Naive thymus-derived CD4-positive, alpha-beta T cell (primary cell): ENCODE measurements at regions of chr19 and their contacts with region 1.

Region 1: DNA sequence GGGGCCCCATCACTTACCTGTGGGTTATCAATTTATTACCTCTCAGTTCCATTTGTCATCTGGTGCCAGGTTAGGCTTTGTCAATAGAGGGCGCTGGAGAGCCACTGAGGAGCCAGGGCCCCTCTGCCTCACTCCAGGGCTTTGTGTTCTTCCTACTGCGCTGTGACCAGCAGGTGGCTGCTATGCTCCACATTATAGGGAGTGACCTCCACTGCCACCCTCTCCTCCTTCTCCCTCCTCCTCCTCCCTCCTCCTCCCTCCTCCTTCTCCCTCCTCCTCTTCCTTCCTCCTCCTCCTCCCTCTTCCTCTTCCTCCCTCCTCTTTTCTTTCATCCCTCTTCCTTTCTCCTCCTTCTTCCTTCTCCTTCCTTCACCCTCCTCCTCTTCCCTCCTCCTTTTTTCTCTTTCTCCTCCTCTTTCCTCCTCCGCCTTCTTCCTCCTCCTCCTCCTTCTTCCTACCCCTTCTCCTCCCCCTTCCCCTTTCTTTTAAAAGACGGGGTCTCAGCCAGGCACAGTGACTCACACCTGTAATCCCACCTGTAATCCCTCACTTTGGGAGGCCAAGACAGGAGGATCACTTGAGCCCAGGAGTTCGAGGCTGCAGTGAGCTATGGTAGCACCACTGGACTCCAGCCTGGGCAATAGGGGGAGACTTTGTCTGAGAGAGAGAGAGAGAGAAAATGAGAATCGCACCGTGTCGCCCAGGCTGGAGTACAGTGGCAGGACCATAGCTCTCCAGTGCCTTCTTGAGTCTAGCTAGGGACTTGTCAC is 10.3 kb upstream of the ZBTB32 start:
- DNase-seq: peak; percentile 75 to 93 (median 86)
- ATAC-seq: peak; percentile 100
- H3K4me3 ChIP-seq: no peak overlapping the region
- H3K4me3 Mint-ChIP-seq: no peak overlapping the region
- H3K27ac ChIP-seq: no peak overlapping the region
- H3K27ac Mint-ChIP-seq: peak overlapping the region in 4 of 9 donors; percentile 6 to 62 (median 40)
- H3K4me1 ChIP-seq: no peaks in the 10 kb centered on the region
- H3K4me1 Mint-ChIP-seq: peaks cover 0 to 27% (median 0%) of the 10 kb centered on the region in 7 donors
- H3K27me3 ChIP-seq: no peaks in the 10 kb centered on the region
- H3K27me3 Mint-ChIP-seq: no peaks in the 10 kb centered on the region

Region 2: DNA sequence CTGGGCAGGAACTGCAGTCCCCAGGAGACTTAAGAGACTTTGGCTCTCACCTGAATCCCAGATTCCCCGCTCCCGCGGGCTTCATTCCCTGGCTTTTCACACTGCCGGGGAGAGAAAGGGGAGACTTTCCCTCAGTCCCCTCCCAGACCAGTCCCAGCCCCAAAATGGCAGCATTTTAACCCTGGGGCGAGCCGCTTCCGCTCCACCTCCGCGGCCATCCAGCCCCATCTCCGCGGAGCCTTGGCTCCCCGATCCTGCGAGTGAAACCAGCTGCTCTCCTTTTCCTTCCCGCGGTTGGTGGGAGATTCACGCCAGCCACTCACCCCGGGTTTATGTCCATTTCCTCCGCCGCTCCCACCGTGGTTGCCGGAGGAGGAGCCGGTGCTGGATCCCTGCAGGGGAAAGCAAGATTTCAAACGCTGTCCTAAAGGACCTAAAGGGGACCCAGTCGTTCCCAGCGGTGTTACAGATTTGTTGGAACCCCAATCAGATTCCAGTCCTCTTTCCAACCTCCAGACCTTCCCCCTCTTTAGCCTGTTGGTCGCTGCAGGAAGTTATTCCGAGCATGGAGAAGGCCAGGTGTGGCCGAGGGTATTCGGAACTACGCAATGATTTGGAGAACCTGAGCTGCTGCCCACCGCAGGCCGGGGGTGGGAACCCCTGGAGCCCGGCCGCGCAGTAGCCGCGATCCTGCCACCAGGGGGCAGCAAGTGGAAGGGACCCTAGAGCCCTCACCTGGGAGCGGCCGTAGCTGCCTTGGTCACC is 184.0 kb before region 1 on chr19:
- CTCF ChIA-PET with region 1: no interaction called
- POLR2A ChIA-PET with region 1: no interaction called
- intact Hi-C with region 1: no loop called
- DNase-seq: peak; percentile 34 to 80 (median 58)
- ATAC-seq: peak; percentile 83
- H3K4me3 ChIP-seq: peak overlapping the region; percentile 53
- H3K4me3 Mint-ChIP-seq: peak overlapping the region; percentile 28 to 84 (median 76)
- H3K27ac ChIP-seq: no peak overlapping the region
- H3K27ac Mint-ChIP-seq: peak overlapping the region in 3 of 9 donors; percentile 20 to 61 (median 46)
- H3K4me1 ChIP-seq: peaks cover 12 to 17% of the 10 kb centered on the region in 2 donors
- H3K4me1 Mint-ChIP-seq: peaks cover 9 to 21% (median 14%) of the 10 kb centered on the region in 7 donors
- H3K27me3 ChIP-seq: peaks cover 0 to 4% of the 10 kb centered on the region in 2 donors
- H3K27me3 Mint-ChIP-seq: peaks cover 0 to 70% (median 14%) of the 10 kb centered on the region in 5 donors

Region 3: DNA sequence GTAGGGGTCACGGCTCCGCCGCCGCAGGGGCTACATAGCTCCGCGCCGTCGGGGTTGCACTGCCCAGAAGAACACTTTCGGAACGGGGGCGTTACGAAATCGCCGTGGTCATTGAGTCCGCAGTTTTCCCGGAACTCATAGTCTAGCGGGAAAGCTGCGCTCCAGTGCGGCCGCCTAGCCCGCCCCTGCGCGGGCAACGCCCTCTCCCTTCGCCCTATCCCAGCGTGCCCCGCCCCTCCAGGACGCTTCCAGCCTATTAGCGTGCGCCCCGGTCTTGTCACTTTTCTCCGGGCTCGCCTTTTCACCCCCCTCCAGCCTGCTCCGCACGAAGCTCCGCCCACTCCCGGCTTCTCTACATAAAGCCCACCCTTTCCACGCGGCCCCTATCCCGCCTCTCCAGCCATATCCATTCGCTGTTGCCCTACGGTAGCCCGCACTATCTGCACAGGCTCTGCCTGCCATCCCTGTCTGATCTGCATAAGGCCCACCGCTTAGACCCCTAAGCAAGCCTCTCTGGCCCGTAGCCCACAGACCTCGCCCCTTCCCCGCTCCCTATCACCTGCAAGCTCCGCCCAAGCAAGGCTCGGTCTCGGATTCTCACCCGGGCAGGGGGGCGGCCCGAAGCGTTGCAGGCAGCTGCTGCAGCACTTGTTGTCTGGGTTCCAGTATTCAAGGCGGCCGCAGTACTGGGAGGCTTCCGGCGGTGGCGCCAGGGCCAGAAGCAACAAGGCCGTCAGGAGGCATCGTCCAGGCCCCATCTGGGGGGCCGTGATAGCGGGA is 46.6 kb after region 1 on chr19:
- CTCF ChIA-PET with region 1: interaction called, 8 read pairs
- POLR2A ChIA-PET with region 1: no interaction called
- intact Hi-C with region 1: loop called (anchors 1 kb)
- DNase-seq: peak; percentile 81 to 95 (median 92)
- ATAC-seq: peak; percentile 78
- H3K4me3 ChIP-seq: peak overlapping the region; percentile 89
- H3K4me3 Mint-ChIP-seq: peak overlapping the region; percentile 87 to 100 (median 92)
- H3K27ac ChIP-seq: peak overlapping the region; percentile 91
- H3K27ac Mint-ChIP-seq: peak overlapping the region; percentile 85 to 99 (median 96)
- H3K4me1 ChIP-seq: peaks cover 27% of the 10 kb centered on the region in 2 donors
- H3K4me1 Mint-ChIP-seq: peaks cover 25 to 67% (median 48%) of the 10 kb centered on the region in 7 donors
- H3K27me3 ChIP-seq: no peaks in the 10 kb centered on the region
- H3K27me3 Mint-ChIP-seq: peaks cover 0 to 2% (median 0%) of the 10 kb centered on the region in 5 donors

Region 4: GRCh38 chr19:35775298-35776110 is 81.5 kb after region 1 on chr19 and contains the start of gene ARHGAP33:
- CTCF ChIA-PET with region 1: interaction called, 3 read pairs
- POLR2A ChIA-PET with region 1: no interaction called
- intact Hi-C with region 1: loop called in 1 of 2 experiments (anchors 1 kb)
- DNase-seq: peak; percentile 96 to 99 (median 98)
- ATAC-seq: peak; percentile 100
- H3K4me3 ChIP-seq: peak within 1 kb of the TSS; percentile 56
- H3K4me3 Mint-ChIP-seq: peak within 1 kb of the TSS; percentile 77 to 94 (median 86)
- H3K27ac ChIP-seq: peak within 1 kb of the TSS; percentile 61
- H3K27ac Mint-ChIP-seq: peak within 1 kb of the TSS in 7 of 9 donors; percentile 12 to 88 (median 84)
- H3K4me1 ChIP-seq: peaks cover 0 to 6% of the 10 kb centered on the region in 2 donors
- H3K4me1 Mint-ChIP-seq: peaks cover 11 to 28% (median 18%) of the 10 kb centered on the region in 7 donors
- H3K27me3 ChIP-seq: no peaks in the 10 kb centered on the region
- H3K27me3 Mint-ChIP-seq: no peaks in the 10 kb centered on the region
- total RNA-seq, gene ARHGAP33: 15.3 to 55.5 (median 23.4) TPM

Region 5: GRCh38 chr19:35790981-35791813 is 97.2 kb after region 1 on chr19:
- CTCF ChIA-PET with region 1: no interaction called
- POLR2A ChIA-PET with region 1: no interaction called
- intact Hi-C with region 1: no loop called
- DNase-seq: peak in 1 of 9 donors; percentile 11
- ATAC-seq: no peak
- H3K4me3 ChIP-seq: no peak overlapping the region
- H3K4me3 Mint-ChIP-seq: no peak overlapping the region
- H3K27ac ChIP-seq: no peak overlapping the region
- H3K27ac Mint-ChIP-seq: no peak overlapping the region
- H3K4me1 ChIP-seq: no peaks in the 10 kb centered on the region
- H3K4me1 Mint-ChIP-seq: no peaks in the 10 kb centered on the region
- H3K27me3 ChIP-seq: no peaks in the 10 kb centered on the region
- H3K27me3 Mint-ChIP-seq: peaks cover 4 to 13% (median 8%) of the 10 kb centered on the region in 5 donors

Region 6: DNA sequence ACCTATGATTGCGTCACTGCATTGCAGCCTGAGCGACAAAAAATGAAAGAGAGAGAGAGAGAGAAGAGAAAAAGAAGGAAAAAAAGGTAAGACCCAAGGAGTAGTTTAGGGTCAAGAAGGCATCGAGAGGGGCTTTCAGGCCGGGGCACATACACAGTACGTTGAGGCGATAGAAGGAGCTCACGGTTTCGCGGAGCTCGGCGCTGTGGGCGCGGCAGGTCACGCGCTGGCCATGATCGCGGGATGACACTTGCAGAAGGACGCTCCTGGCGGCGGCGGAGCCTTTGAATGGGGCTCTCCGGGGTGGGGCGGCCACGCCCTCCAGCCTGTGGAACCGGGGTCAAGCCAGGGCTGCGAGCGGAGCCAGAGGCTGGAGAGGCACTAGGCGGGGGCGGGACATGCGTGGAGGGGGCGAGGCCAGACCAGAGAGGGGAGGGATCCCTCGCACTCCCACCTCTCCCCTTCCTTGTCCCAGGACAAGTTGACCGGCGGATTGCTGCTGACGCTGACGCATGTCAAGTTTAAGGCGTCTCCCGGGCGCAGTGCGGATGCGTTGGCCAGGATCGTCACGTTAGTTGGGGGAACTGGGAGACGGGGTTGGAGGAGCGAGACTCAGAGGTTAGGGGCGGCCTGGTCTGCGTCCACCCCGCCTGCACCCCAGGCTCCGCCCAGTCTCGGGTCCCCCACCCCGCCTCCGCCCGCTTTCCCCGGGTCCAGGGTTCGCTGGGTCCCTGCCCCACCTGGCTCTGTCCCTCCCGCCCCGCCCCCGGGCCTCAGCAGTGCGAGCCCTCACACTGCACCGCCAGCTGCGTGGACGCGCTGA is 151.4 kb after region 1 on chr19:
- CTCF ChIA-PET with region 1: no interaction called
- POLR2A ChIA-PET with region 1: no interaction called
- intact Hi-C with region 1: no loop called
- DNase-seq: no peak
- ATAC-seq: peak; percentile 40
- H3K4me3 ChIP-seq: no peak overlapping the region
- H3K4me3 Mint-ChIP-seq: peak overlapping the region; percentile 59 to 90 (median 79)
- H3K27ac ChIP-seq: no peak overlapping the region
- H3K27ac Mint-ChIP-seq: no peak overlapping the region
- H3K4me1 ChIP-seq: peaks cover 0 to 6% of the 10 kb centered on the region in 2 donors
- H3K4me1 Mint-ChIP-seq: peaks cover 9 to 31% (median 21%) of the 10 kb centered on the region in 7 donors
- H3K27me3 ChIP-seq: peaks cover 6 to 25% of the 10 kb centered on the region in 2 donors
- H3K27me3 Mint-ChIP-seq: peaks cover 49 to 79% (median 60%) of the 10 kb centered on the region in 5 donors

Region 7: DNA sequence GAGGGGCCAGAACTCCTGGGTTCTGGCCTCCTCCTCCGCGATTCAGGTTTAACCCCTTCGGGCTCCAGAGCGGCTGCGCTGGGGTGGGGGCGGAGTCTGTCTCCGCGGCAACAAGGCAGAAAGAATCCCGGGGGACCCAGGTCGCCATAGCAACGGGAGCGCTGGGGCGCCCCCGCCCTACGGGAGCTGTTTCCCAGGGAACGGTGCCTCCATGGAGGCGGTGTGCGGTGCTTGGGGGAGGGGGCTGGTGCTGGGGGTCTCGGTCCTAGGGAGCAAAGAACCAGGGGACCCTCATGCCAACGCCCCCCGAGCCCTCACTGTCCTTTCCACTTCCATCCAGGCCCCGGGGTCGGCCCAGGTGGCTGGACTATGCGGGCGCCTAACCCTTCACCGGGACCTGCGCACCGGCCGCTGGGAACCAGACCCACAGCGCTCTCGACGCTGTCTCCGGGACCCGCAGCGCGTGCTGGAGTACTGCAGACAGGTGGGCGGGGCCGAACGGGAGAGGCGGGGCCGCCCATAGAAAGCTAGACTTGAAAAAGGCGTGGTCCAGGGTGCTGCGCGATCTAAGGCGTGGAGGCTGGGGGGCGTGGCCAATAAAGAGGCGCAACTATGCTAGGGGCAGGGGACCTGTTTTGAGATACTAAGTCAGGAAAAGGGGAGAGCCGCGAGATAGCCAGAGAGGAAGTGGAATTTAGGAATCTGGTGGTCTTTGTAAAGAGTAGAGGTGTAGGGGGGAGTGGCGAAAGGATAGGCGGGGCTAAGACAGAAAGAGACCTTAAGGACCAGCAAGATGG is 175.5 kb after region 1 on chr19:
- CTCF ChIA-PET with region 1: no interaction called
- POLR2A ChIA-PET with region 1: no interaction called
- intact Hi-C with region 1: loop called in 1 of 2 experiments (anchors 5 kb)
- DNase-seq: peak; percentile 55 to 88 (median 78)
- ATAC-seq: peak; percentile 95
- H3K4me3 ChIP-seq: no peak overlapping the region
- H3K4me3 Mint-ChIP-seq: peak overlapping the region; percentile 75 to 92 (median 82)
- H3K27ac ChIP-seq: no peak overlapping the region
- H3K27ac Mint-ChIP-seq: peak overlapping the region in 5 of 9 donors; percentile 12 to 68 (median 53)
- H3K4me1 ChIP-seq: peaks cover 16 to 18% of the 10 kb centered on the region in 2 donors
- H3K4me1 Mint-ChIP-seq: peaks cover 13 to 22% (median 17%) of the 10 kb centered on the region in 7 donors
- H3K27me3 ChIP-seq: peaks cover 5 to 7% of the 10 kb centered on the region in 2 donors
- H3K27me3 Mint-ChIP-seq: peaks cover 22 to 57% (median 42%) of the 10 kb centered on the region in 5 donors

Region 8: DNA sequence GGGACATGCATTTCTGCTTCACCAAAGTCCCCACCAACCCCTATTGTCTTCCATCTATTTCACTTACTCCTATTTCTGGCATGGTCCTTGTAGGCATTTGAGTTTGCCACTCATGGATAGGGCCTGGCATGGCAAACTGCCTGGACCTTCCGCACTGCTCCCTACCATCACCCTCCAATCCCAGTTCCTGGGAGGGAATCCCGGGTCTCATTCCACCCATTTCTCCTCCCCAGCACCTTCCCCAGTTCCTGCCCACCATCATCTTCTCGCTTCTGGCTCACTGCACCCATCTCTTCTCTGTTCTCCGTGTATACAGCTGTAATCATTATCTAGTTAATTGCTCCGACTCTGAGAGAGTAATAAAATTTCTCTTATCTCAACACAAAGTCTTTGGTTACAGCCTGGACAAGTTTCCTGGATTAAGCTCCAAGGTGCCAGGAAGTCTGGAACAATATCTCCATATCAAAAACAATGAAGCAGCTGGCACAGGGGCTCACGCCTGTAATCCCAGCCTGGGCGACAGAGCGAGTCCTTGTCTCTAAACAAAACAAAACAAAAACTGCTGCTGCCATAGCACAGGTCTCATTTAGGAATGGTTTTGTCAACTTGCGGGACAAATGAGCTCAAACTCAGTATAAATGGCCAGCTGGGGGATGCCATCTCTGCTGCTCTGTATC is 475.2 kb after region 1 on chr19:
- CTCF ChIA-PET with region 1: no interaction called
- POLR2A ChIA-PET with region 1: no interaction called
- intact Hi-C with region 1: loop called in 1 of 2 experiments (anchors 5 kb)
- DNase-seq: no peak
- ATAC-seq: no peak
- H3K4me3 ChIP-seq: no peak overlapping the region
- H3K4me3 Mint-ChIP-seq: no peak overlapping the region
- H3K27ac ChIP-seq: no peak overlapping the region
- H3K27ac Mint-ChIP-seq: peak overlapping the region in 2 of 9 donors; percentile 6 to 18
- H3K4me1 ChIP-seq: no peaks in the 10 kb centered on the region
- H3K4me1 Mint-ChIP-seq: peaks cover 0 to 5% (median 0%) of the 10 kb centered on the region in 7 donors
- H3K27me3 ChIP-seq: no peaks in the 10 kb centered on the region
- H3K27me3 Mint-ChIP-seq: no peaks in the 10 kb centered on the region